ENCODE measurements at regions of chr2 and their contacts with region 1.

Region 1: GRCh38 chr2:38090928-38091327 is 15.0 kb upstream of the CYP1B1 start:
- DNase-seq: no peak
- H3K4me3 ChIP-seq: no peak overlapping the region
- H3K27ac ChIP-seq: peak overlapping the region; percentile 92
- H3K4me1 ChIP-seq: peaks cover 48% of the 10 kb centered on the region
- H3K27me3 ChIP-seq: no peaks in the 10 kb centered on the region
- CTCF ChIP-seq: no peak

Region 2: GRCh38 chr2:37851828-37852584 is 238.9 kb before region 1 on chr2:
- CTCF ChIA-PET with region 1: no interaction called
- POLR2A ChIA-PET with region 1: no interaction called
- intact Hi-C with region 1: no loop called
- DNase-seq: no peak
- H3K4me3 ChIP-seq: no peak overlapping the region
- H3K27ac ChIP-seq: no peak overlapping the region
- H3K4me1 ChIP-seq: no peaks in the 10 kb centered on the region
- H3K27me3 ChIP-seq: no peaks in the 10 kb centered on the region
- CTCF ChIP-seq: no peak

Region 3: DNA sequence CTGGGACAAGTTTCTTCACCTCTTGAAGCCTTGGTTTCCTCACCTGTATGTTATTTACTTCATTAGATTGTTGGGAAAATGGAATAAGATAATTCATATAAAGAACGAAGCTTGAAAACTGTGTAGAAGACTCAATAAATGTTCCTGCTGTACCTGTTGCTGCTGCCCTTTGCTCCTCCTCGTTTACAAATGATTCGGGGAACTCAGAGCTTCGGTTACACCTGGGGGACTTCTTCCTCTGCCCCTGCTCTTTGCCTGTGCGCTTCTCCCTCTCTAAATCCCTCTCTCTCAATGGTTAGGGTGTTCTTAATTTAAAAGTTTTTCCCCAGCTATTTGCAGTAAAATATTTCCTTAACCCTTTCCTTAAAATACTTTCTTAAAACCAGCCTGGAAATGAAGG is 169.1 kb before region 1 on chr2:
- CTCF ChIA-PET with region 1: no interaction called
- POLR2A ChIA-PET with region 1: interaction called, 22 read pairs
- intact Hi-C with region 1: no loop called
- DNase-seq: no peak
- H3K4me3 ChIP-seq: no peak overlapping the region
- H3K27ac ChIP-seq: no peak overlapping the region
- H3K4me1 ChIP-seq: peaks cover 22% of the 10 kb centered on the region
- H3K27me3 ChIP-seq: no peaks in the 10 kb centered on the region
- CTCF ChIP-seq: no peak

Region 4: DNA sequence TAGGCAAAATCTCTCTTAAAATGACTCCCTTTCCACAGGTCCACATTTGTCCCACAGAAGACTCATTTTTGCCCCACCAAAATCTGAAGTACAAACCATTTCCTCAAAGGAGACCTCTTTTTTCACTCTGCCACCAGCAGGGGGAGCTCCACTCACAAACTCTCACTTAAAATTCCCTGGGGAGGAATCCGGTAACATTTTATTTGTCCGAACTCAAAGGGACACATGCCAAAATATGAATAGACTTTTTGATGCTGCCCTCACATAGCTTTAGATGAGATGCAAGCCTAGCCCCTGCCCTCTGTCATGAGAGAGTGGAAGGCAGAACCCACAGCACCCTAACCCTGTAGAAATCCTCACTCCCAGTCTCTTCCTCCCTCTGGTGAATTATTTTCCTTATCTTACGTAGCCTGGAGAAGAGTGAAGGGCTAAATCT is 108.8 kb before region 1 on chr2:
- CTCF ChIA-PET with region 1: no interaction called
- POLR2A ChIA-PET with region 1: no interaction called
- intact Hi-C with region 1: no loop called
- DNase-seq: peak; percentile 48 to 61
- H3K4me3 ChIP-seq: no peak overlapping the region
- H3K27ac ChIP-seq: no peak overlapping the region
- H3K4me1 ChIP-seq: peaks cover 12% of the 10 kb centered on the region
- H3K27me3 ChIP-seq: no peaks in the 10 kb centered on the region
- CTCF ChIP-seq: peak; percentile 96

Region 5: DNA sequence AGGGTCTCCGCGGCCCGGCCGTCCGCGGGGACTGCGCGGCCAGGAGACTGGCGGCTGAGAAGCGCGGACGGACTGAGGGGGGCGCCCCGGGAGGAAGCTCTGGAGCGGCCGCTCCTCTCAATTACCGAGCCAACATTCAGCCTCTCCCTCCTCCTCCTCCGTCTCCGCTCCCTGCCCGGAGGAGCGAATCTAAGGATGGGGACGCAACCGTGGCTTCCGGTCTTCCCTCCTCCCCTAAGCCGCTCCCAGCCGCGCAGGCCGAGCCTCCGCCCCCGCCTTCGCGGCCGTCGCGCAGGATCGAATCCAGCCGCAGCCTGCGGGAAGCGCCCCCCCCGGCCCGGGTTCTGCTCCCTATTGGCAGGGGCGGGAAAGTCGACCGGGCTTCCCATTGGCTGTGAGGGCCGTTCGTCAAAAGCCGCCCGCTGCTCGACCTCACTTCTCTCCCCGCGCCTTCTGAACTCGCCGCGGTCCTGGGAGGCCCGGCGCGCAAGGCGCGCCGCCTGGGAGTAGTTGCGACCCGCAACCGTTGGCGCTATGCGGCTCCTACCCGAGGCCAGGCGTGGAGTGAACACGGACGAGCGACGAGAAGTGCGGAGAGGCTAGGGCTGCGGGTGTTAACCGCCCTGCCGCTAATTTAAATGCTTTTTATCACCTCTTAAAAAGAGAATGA is 511.9 kb after region 1 on chr2 and contains the start of gene HNRNPLL:
- CTCF ChIA-PET with region 1: no interaction called
- POLR2A ChIA-PET with region 1: no interaction called
- intact Hi-C with region 1: no loop called
- DNase-seq: peak; percentile 92 to 99
- H3K4me3 ChIP-seq: peak within 1 kb of the TSS; percentile 69
- H3K27ac ChIP-seq: peak within 1 kb of the TSS; percentile 54
- H3K4me1 ChIP-seq: peaks cover 34% of the 10 kb centered on the region
- H3K27me3 ChIP-seq: no peaks in the 10 kb centered on the region
- CTCF ChIP-seq: no peak
- total RNA-seq, gene HNRNPLL: 38.1 and 39.5 TPM in 2 replicates